ENCODE measurements at regions of chr2 and their contacts with region 1.

Region 1: DNA sequence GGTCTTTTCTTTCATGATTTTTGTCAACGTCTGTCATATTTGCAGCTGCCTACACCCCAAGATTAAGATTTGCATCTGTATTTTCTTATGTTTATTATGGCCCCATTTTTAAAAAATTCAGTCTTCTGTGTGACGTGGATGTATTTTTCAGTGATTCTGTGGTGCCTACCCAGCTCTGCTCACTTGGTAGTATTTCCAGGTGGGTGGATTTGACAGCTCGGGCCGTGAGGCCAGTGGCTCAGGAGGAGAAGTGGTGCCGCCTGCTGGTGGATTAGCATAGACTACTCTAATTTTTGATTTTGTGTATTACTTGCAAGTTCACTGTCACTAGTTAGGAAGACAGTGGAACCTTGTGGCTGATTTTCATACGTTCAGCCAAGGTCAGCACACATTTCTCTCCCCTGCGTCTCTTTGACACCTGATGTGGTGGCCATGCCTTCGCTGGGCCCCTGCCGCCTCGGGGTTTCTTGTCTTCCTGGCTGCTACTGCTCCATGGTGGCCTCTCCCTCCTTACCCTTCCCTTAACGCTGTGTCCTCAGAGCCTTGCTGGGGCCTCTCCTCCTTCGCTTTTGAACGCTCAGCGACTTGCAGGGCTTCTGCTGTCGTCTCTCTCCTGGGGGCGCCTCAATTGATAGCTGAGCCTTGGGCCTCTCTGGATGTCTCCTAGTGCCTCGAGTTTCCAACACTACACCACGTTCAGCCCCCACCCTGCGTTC is 89.3 kb downstream of the DGKD start:
- DNase-seq: peak; percentile 73
- H3K4me3 Mint-ChIP-seq: no peak overlapping the region
- H3K27ac Mint-ChIP-seq: no peak overlapping the region
- H3K4me1 Mint-ChIP-seq: peaks cover 6% of the 10 kb centered on the region
- H3K27me3 Mint-ChIP-seq: no peaks in the 10 kb centered on the region

Region 2: DNA sequence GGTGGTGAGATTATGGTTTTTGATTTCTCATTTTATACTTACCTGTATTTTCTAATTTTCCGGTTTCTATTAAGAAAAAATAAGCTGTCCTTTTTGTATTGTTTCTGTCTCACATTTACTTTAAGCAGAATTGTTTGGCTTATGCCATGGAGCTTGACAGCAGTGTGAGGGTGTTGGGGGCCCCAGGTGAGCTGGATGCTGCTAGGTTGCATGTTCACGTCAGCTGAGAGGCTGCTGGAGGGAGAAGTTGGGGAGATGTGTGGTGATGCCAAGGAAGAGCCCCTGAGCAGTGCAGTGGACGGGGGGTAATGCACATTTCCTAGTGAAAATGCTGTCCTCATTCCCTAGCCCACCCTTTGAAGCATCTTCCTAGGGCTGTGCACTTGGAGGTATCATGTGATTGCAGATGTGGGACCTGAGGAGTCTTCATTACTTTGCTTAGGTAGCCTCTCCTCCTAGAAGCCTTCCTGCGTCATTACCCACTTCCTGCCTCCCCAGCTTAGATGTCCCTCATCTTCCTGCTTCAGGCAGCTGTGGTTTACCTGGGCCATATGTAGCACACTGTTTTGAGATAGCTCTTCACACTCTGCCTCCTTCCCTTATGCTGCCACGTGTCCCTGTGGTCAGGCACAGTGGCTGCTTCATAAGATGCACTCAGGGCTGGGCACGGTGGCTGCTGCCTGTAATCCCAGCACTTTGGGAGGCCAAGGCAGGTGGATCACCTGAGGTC is 175.9 kb before region 1 on chr2:
- intact Hi-C with region 1: loop called (anchors 10 kb)
- DNase-seq: peak; percentile 84
- H3K4me3 Mint-ChIP-seq: peak overlapping the region; percentile 66
- H3K27ac Mint-ChIP-seq: peak overlapping the region; percentile 93
- H3K4me1 Mint-ChIP-seq: peaks cover 61% of the 10 kb centered on the region
- H3K27me3 Mint-ChIP-seq: no peaks in the 10 kb centered on the region

Region 3: DNA sequence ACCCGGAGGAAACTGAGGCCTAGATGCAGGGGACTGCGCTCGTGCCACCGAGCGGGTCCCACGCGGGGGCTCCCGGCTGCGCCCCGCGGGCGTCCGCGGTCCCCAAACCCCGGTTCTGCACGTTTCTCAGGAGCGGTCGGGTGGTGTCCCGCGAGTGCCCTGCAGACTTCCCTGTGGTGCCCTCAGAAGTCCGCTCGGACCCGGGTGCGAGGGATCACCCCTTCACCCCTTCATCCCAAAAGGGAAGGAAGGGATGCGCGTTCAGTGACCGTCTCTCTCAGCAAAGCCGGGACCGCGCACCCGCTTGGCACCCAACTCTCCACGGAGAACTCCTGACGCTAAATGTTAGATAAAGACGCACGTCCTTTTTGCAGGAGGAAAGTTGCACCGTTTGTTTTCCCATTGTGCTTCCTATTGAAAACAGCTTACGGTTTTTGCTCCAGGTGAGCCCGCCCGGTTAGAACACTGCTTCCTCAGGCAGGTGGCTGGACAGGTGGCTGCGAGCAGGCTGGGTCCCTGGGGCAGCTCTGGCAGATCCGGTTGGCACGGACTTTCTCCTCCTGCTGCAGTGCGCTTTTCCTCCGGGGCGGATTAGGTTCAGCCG is 88.6 kb before region 1 on chr2:
- intact Hi-C with region 1: loop called (anchors 5 kb)
- DNase-seq: no peak
- H3K4me3 Mint-ChIP-seq: peak overlapping the region; percentile 83
- H3K27ac Mint-ChIP-seq: peak overlapping the region; percentile 62
- H3K4me1 Mint-ChIP-seq: peaks cover 64% of the 10 kb centered on the region
- H3K27me3 Mint-ChIP-seq: no peaks in the 10 kb centered on the region

Region 4: GRCh38 chr2:233387667-233388528 is 55.7 kb before region 1 on chr2:
- intact Hi-C with region 1: loop called (anchors 10 kb)
- DNase-seq: no peak
- H3K4me3 Mint-ChIP-seq: no peak overlapping the region
- H3K27ac Mint-ChIP-seq: no peak overlapping the region
- H3K4me1 Mint-ChIP-seq: peaks cover 40% of the 10 kb centered on the region
- H3K27me3 Mint-ChIP-seq: no peaks in the 10 kb centered on the region

Region 5: DNA sequence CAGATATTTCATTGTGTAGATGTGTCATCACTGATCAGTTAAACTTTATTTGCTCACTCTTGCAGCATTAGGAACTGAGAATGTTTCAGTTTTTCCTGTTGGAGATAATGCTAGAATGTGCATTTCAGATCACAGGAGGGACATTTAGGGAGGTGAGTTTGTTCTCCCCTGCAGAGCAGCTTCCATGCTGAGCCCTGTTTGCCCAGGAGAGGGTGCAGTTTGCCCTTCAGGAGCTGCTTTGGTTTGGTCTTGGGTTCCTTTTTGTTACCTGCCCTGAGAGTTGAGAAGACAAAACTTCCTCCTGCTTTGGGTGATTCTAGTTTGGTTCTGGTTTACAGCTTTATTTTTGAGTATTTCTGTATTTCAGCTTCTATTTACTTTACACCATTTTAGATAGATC is 39.4 kb before region 1 on chr2:
- intact Hi-C with region 1: loop called (anchors 1 kb)
- DNase-seq: peak; percentile 51
- H3K4me3 Mint-ChIP-seq: no peak overlapping the region
- H3K27ac Mint-ChIP-seq: no peak overlapping the region
- H3K4me1 Mint-ChIP-seq: peaks cover 36% of the 10 kb centered on the region
- H3K27me3 Mint-ChIP-seq: no peaks in the 10 kb centered on the region